ENCODE measurements at regions of chr6 and their contacts with region 1.

Region 1: DNA sequence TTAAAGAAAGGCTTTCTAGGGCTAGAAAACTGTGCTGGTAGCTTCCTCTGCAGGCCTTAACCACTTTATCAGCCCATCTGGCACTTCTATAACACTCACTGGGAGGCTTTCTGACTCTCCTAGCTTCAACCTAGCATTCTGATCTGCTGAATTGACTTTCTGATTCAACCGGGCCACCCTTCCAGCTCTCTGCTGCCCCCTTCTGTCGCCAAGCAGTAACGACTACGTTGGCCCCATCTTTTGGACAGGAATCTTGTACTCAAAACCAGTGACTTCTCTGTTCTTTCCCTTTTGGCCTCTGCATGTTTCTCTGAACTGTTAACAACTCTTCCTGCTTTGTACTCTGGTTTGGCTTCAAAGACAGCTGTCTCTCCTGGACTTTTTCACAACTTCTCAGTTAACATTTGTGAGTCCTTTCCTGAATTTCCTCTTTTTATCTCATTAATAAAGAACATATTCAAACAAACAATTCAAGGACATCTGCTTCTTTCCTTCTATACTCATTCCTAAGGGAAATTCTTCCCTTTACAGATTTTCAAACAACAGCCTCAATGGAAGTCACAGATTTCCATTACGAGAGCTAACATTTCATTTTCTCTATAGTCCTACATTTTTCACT is 43.9 kb upstream of the FAM135A start:
- DNase-seq: peak; percentile 8
- H3K4me3 ChIP-seq: no peak overlapping the region
- H3K27me3 ChIP-seq: peaks cover 7% of the 10 kb centered on the region
- CTCF ChIP-seq: peak; percentile 97

Region 2: GRCh38 chr6:70277470-70277869 is 92.0 kb before region 1 on chr6:
- CTCF ChIA-PET with region 1: no interaction called
- POLR2A ChIA-PET with region 1: no interaction called
- DNase-seq: no peak
- H3K4me3 ChIP-seq: no peak overlapping the region
- H3K27me3 ChIP-seq: peaks cover 2% of the 10 kb centered on the region
- CTCF ChIP-seq: no peak

Region 3: DNA sequence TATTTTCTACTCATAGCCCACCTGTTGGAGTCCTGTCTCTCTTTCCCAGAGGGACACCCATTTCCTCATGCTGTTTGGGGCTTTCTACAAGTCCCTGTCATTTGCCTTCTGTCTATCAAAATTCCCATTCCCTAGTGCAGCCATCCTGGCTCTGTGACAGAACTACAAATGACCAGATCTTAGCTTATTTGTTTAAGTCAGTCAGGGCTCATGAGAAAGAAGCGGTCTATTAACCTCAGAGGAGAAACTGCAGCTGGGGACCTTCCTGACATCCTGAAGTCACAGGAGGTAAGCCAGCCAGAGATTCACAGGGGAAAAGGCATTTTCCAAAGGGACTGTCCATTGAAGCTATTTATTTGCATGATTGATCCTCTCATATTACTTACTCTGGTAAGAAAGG is 64.8 kb before region 1 on chr6:
- CTCF ChIA-PET with region 1: interaction called, 72 read pairs
- POLR2A ChIA-PET with region 1: no interaction called
- DNase-seq: no peak
- H3K4me3 ChIP-seq: no peak overlapping the region
- H3K27me3 ChIP-seq: peaks cover 3% of the 10 kb centered on the region
- CTCF ChIP-seq: no peak

Region 4: GRCh38 chr6:70345619-70346018 is 23.8 kb before region 1 on chr6:
- CTCF ChIA-PET with region 1: interaction called, 10 read pairs
- POLR2A ChIA-PET with region 1: no interaction called
- DNase-seq: no peak
- H3K4me3 ChIP-seq: no peak overlapping the region
- H3K27me3 ChIP-seq: 0 out of 2 replicates have a peak, but pooled peaks cover 1% of the 10 kb centered on the region
- CTCF ChIP-seq: no peak

Region 5: GRCh38 chr6:70413114-70413991 is 43.9 kb after region 1 on chr6 and contains the start of gene FAM135A:
- CTCF ChIA-PET with region 1: interaction called, 10 read pairs
- POLR2A ChIA-PET with region 1: no interaction called
- DNase-seq: peak; percentile 85
- H3K4me3 ChIP-seq: peak within 1 kb of the TSS; percentile 85
- H3K27me3 ChIP-seq: no peaks in the 10 kb centered on the region
- CTCF ChIP-seq: no peak
- polyA plus RNA-seq, gene FAM135A: 2.9 and 6.2 TPM in 2 replicates

Measured in BJ (cell line).